CD8-positive, alpha-beta T cell (primary cell): ENCODE measurements at regions of chr3 and their contacts with region 1.

Region 1: GRCh38 chr3:184561061-184561912 is at the start of gene EPHB3:
- DNase-seq: peak; percentile 80 to 93 (median 91)
- ATAC-seq: peak; percentile 86
- H3K4me3 ChIP-seq: peak within 1 kb of the TSS; percentile 42 to 43
- H3K4me3 Mint-ChIP-seq: peak within 1 kb of the TSS; percentile 70
- H3K27ac ChIP-seq: no peak within 1 kb of the TSS
- H3K27ac Mint-ChIP-seq: peak within 1 kb of the TSS; percentile 8
- H3K4me1 ChIP-seq: peaks cover 47% of the 10 kb centered on the region
- H3K4me1 Mint-ChIP-seq: peaks cover 43% of the 10 kb centered on the region
- H3K27me3 ChIP-seq: peaks cover 6 to 22% of the 10 kb centered on the region in 2 experiments
- H3K27me3 Mint-ChIP-seq: peaks cover 38% of the 10 kb centered on the region
- CTCF ChIP-seq: peak; percentile 94
- total RNA-seq, gene EPHB3: not detected

Region 2: DNA sequence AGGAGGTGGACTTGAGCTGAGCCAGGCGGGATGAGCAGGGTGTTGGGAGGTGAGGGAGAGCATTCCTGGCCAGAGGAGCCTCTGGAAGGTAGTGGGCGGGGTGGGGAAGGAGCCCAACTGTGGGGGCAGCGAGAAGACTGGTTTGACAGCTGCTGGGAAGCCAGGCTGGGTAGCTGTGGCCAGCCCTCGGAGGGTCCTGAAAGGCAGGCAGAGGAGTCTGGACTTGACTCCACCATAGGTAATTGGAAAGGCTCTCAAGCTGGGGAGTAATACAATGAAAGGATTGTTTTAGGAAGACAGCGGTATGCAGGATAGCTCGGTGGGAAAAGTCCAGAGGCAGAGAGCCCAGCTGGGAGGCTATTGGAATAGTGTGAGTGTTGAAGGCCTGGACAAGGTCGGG is 17.5 kb after region 1 on chr3:
- CTCF ChIA-PET with region 1: interaction called, 10 read pairs
- POLR2A ChIA-PET with region 1: no interaction called
- intact Hi-C with region 1: no loop called
- DNase-seq: no peak
- ATAC-seq: no peak
- H3K4me3 ChIP-seq: no peak overlapping the region
- H3K4me3 Mint-ChIP-seq: no peak overlapping the region
- H3K27ac ChIP-seq: no peak overlapping the region
- H3K27ac Mint-ChIP-seq: no peak overlapping the region
- H3K4me1 ChIP-seq: peaks cover 7% of the 10 kb centered on the region
- H3K4me1 Mint-ChIP-seq: peaks cover 7% of the 10 kb centered on the region
- H3K27me3 ChIP-seq: peaks cover 5% of the 10 kb centered on the region in 2 experiments
- H3K27me3 Mint-ChIP-seq: peaks cover 30% of the 10 kb centered on the region
- CTCF ChIP-seq: no peak

Region 3: GRCh38 chr3:184711493-184712247 is 150.4 kb after region 1 on chr3 and contains the start of gene MAGEF1:
- CTCF ChIA-PET with region 1: interaction called, 6 read pairs
- POLR2A ChIA-PET with region 1: interaction called, 8 read pairs
- intact Hi-C with region 1: loop called in 1 of 2 experiments (anchors 1 kb)
- DNase-seq: peak; percentile 22 to 85 (median 73)
- ATAC-seq: peak; percentile 83
- H3K4me3 ChIP-seq: peak within 1 kb of the TSS; percentile 62 to 85
- H3K4me3 Mint-ChIP-seq: peak within 1 kb of the TSS; percentile 90
- H3K27ac ChIP-seq: peak within 1 kb of the TSS; percentile 73 to 77
- H3K27ac Mint-ChIP-seq: peak within 1 kb of the TSS; percentile 91
- H3K4me1 ChIP-seq: peaks cover 14% of the 10 kb centered on the region
- H3K4me1 Mint-ChIP-seq: peaks cover 28% of the 10 kb centered on the region
- H3K27me3 ChIP-seq: no peaks in the 10 kb centered on the region
- H3K27me3 Mint-ChIP-seq: no peaks in the 10 kb centered on the region
- CTCF ChIP-seq: no peak
- total RNA-seq, gene MAGEF1: 3.2 to 3.3 TPM

Region 4: DNA sequence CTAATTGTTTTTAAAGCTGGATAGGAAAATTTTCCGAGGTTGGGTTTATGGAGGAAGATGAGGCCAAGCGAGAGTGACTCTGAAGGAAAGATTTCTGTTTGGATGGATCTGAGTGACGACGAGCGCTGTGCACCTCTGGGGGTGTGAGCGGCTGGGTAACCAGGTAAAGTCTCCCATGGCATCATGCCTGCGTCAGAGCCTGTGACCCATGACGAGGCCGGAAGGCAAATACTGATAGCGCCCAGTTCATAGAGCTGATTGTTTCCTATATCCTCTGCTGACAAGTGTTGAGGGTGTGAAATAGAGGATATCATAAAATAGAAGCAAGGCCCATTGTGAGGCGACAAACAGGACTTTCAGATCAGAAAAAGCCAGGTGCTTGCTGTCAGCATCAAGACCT is 184.2 kb after region 1 on chr3:
- CTCF ChIA-PET with region 1: interaction called, 12 read pairs
- POLR2A ChIA-PET with region 1: no interaction called
- intact Hi-C with region 1: no loop called
- DNase-seq: no peak
- ATAC-seq: no peak
- H3K4me3 ChIP-seq: no peak overlapping the region
- H3K4me3 Mint-ChIP-seq: no peak overlapping the region
- H3K27ac ChIP-seq: no peak overlapping the region
- H3K27ac Mint-ChIP-seq: no peak overlapping the region
- H3K4me1 ChIP-seq: no peaks in the 10 kb centered on the region
- H3K4me1 Mint-ChIP-seq: no peaks in the 10 kb centered on the region
- H3K27me3 ChIP-seq: no peaks in the 10 kb centered on the region
- H3K27me3 Mint-ChIP-seq: peaks cover 15% of the 10 kb centered on the region
- CTCF ChIP-seq: no peak

Region 5: GRCh38 chr3:184786280-184786941 is 225.1 kb after region 1 on chr3:
- CTCF ChIA-PET with region 1: interaction called, 24 read pairs
- POLR2A ChIA-PET with region 1: interaction called, 3 read pairs
- intact Hi-C with region 1: no loop called
- DNase-seq: peak in 2 of 9 experiments; percentile 14 to 34
- ATAC-seq: peak; percentile 48
- H3K4me3 ChIP-seq: no peak overlapping the region
- H3K4me3 Mint-ChIP-seq: peak overlapping the region; percentile 1
- H3K27ac ChIP-seq: no peak overlapping the region
- H3K27ac Mint-ChIP-seq: no peak overlapping the region
- H3K4me1 ChIP-seq: peaks cover 25% of the 10 kb centered on the region
- H3K4me1 Mint-ChIP-seq: peaks cover 27% of the 10 kb centered on the region
- H3K27me3 ChIP-seq: no peaks in the 10 kb centered on the region
- H3K27me3 Mint-ChIP-seq: peaks cover 14% of the 10 kb centered on the region
- CTCF ChIP-seq: no peak